ENCODE measurements at regions of chr13 and their contacts with region 1.

Region 1: GRCh38 chr13:26985285-26985878 is 186.2 kb downstream of the USP12 start:
- DNase-seq: peak in 41 of 42 donors; percentile 46 to 93 (median 79)

Region 2: GRCh38 chr13:27177852-27178251 is 192.5 kb after region 1 on chr13:
- intact Hi-C with region 1: loop called (anchors 5 kb)
- DNase-seq: no peak

Region 3: GRCh38 chr13:27283906-27284493 is 298.6 kb after region 1 on chr13:
- intact Hi-C with region 1: loop called (anchors 5 kb)
- DNase-seq: peak in 33 of 42 donors; percentile 35 to 80 (median 57)